Activated T-helper 1 cell treated with anti-CD3 and anti-CD28 coated beads, Interleukin-12 subunit alpha, Interleukin-12 subunit beta, Interleukin-2, Interleukin-4 antibody, amounts not matched to agents 30 ng/mL and 10 ng/mL and 1 ng/mL, durations not matched to agents 14 hours and 24 hours and 36 hours (primary cell): ENCODE measurements at regions of chrX and their contacts with region 1.

Region 1: DNA sequence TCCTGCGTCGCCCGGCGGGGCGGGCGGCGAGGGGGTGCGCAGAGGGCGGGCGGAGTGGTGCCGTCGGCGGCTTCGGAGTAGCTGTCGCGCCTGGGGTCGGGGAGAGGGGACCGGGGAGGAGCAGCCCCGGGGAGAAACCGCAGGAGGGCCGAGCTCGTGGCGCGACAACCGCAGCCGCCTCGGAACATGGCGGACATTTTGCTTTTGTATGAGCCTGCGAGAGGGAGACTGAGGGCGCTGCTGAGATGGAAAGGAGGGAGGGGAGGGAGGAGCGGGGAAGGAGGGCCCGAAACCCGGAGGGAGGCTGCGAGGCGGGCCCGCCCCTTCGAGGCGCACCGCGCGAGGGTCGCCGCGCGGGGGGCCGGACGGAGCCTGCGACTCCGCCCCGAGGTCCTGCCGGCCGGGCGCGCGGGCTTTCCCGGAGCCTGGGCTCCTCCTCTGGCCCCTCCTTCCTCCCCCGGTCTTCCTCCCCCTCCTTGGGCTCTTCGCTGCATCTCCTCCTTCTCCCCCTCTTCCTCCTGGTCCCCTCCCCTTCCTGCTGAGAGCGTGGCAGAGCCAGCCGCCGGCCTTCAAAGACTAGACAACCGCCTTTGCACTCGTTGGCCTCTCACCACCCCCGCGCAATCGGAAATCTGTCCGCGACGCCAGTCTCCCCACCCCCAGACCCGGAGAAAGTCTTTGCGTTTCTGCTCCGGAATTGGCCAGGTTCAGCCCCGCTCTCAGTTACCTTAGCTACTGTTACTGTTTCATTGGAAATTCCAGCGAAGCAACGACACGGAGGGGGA is 1.1 kb downstream of the INTS6L start:
- DNase-seq: peak; percentile 78
- H3K4me3 Mint-ChIP-seq: peak overlapping the region; percentile 99
- H3K27ac Mint-ChIP-seq: peak overlapping the region; percentile 99
- H3K4me1 Mint-ChIP-seq: peaks cover 49% of the 10 kb centered on the region
- H3K27me3 Mint-ChIP-seq: no peaks in the 10 kb centered on the region

Region 2: GRCh38 chrX:134460005-134460861 is 1061.4 kb before region 1 on chrX and contains the start of gene HPRT1:
- intact Hi-C with region 1: loop called (anchors 10 kb)
- DNase-seq: peak; percentile 76
- H3K4me3 Mint-ChIP-seq: peak within 1 kb of the TSS; percentile 90
- H3K27ac Mint-ChIP-seq: peak within 1 kb of the TSS; percentile 91
- H3K4me1 Mint-ChIP-seq: peaks cover 19% of the 10 kb centered on the region
- H3K27me3 Mint-ChIP-seq: no peaks in the 10 kb centered on the region
- total RNA-seq, gene HPRT1: 106 and 113 TPM in 2 replicates

Region 3: GRCh38 chrX:135050603-135051002 is 471.0 kb before region 1 on chrX:
- intact Hi-C with region 1: loop called (anchors 1 kb)
- DNase-seq: no peak
- H3K4me3 Mint-ChIP-seq: peak overlapping the region; percentile 93
- H3K27ac Mint-ChIP-seq: peak overlapping the region; percentile 87
- H3K4me1 Mint-ChIP-seq: peaks cover 25% of the 10 kb centered on the region
- H3K27me3 Mint-ChIP-seq: no peaks in the 10 kb centered on the region

Region 4: DNA sequence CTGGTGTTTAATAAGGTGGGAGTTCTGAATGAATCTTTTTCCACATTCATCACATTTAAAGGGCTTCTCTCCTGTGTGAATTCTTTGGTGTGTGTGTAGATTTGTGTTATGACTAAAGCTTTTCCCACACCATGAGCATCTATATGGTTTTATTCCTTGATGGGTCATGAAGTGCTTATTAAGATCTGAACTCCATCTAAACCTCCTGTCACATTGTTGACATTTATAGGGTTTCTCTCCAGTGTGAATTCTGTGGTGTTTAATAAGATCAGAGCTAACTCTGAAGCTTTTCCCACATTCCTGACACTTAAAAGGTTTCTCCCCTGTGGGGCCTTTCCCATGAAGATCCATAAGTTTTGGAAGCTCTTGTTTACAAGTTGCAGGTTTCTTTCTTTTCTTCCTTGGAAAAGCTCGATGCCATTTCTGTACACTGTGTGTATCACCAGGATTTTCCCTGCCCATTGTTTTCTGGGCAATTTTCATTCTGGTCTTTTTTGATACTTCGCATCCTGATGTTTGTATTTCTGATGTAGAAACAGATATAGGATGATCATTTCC is 234.3 kb before region 1 on chrX:
- intact Hi-C with region 1: no loop called
- DNase-seq: no peak
- H3K4me3 Mint-ChIP-seq: no peak overlapping the region
- H3K27ac Mint-ChIP-seq: no peak overlapping the region
- H3K4me1 Mint-ChIP-seq: no peaks in the 10 kb centered on the region
- H3K27me3 Mint-ChIP-seq: no peaks in the 10 kb centered on the region

Region 5: GRCh38 chrX:135484641-135485289 is 36.8 kb before region 1 on chrX:
- intact Hi-C with region 1: loop called (anchors 1 kb)
- DNase-seq: no peak
- H3K4me3 Mint-ChIP-seq: no peak overlapping the region
- H3K27ac Mint-ChIP-seq: no peak overlapping the region
- H3K4me1 Mint-ChIP-seq: no peaks in the 10 kb centered on the region
- H3K27me3 Mint-ChIP-seq: no peaks in the 10 kb centered on the region

Region 6: DNA sequence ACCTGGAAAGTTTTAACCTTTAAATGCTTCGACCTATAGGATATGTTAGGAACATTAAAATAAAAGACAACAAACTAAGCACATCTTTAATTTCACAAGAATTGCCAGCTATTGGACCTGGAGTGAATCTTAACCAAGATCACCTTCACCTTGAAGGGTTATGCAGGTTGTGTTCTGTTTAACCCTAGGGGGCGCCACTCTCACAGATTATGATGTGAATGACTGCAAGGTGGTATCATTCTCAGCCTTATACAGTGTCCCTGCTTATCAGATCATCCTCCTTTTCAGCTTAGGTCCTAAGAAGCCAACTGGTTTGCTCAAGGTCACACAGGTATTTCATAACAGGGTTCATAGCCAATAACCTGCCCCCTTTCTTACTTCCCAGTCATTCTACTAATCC is 22.3 kb after region 1 on chrX:
- intact Hi-C with region 1: loop called (anchors 2 kb)
- DNase-seq: no peak
- H3K4me3 Mint-ChIP-seq: no peak overlapping the region
- H3K27ac Mint-ChIP-seq: no peak overlapping the region
- H3K4me1 Mint-ChIP-seq: peaks cover 29% of the 10 kb centered on the region
- H3K27me3 Mint-ChIP-seq: no peaks in the 10 kb centered on the region

Region 7: DNA sequence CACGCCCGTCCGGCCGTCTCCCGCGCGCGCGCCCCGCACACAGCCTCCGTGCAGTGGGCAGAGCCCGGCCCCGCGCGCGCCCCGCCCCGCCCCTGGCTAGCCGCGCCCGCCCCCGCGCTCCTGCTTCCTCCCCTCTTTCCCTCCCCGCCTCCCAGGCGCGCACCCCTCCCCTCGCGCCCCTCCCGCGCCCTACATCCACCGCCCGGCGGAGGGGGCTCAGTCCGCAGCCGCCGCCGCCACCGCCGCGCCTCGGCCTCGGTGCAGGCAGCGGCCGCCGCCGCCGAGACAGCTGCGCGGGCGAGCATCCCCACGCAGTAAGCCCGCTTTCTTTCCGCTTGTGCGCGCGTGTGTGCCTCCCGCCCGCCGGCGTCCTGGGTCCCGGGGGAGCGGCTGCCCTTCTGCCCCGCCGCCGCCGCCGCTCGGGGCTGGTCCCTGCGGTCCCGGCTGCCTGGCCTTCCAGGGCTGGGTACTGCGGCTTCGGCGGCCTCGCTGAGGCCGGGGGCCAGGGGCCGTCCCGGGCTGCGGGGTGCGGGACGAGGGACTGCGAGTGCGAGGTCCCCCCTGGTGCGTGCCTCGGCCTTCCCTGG is 625.8 kb after region 1 on chrX and contains the start of gene FHL1:
- intact Hi-C with region 1: loop called (anchors 10 kb)
- DNase-seq: peak; percentile 22
- H3K4me3 Mint-ChIP-seq: peak within 1 kb of the TSS; percentile 85
- H3K27ac Mint-ChIP-seq: peak within 1 kb of the TSS; percentile 21
- H3K4me1 Mint-ChIP-seq: peaks cover 20% of the 10 kb centered on the region
- H3K27me3 Mint-ChIP-seq: peaks cover 5% of the 10 kb centered on the region
- total RNA-seq, gene FHL1: 8.5 and 8.7 TPM in 2 replicates